ENCODE measurements at regions of chr15 and their contacts with region 1.

Region 1: GRCh38 chr15:63945007-63945788 is 101.1 kb downstream of the DAPK2 start:
- DNase-seq: peak; percentile 85
- H3K4me3 Mint-ChIP-seq: no peak overlapping the region
- H3K27ac Mint-ChIP-seq: no peak overlapping the region
- H3K4me1 Mint-ChIP-seq: peaks cover 3% of the 10 kb centered on the region
- H3K27me3 Mint-ChIP-seq: no peaks in the 10 kb centered on the region

Region 2: GRCh38 chr15:63668601-63669000 is 276.6 kb before region 1 on chr15:
- CTCF ChIA-PET with region 1: no interaction called
- intact Hi-C with region 1: no loop called
- DNase-seq: no peak
- H3K4me3 Mint-ChIP-seq: peak overlapping the region; percentile 57
- H3K27ac Mint-ChIP-seq: peak overlapping the region; percentile 83
- H3K4me1 Mint-ChIP-seq: peaks cover 57% of the 10 kb centered on the region
- H3K27me3 Mint-ChIP-seq: no peaks in the 10 kb centered on the region

Region 3: GRCh38 chr15:63708126-63708772 is 236.9 kb before region 1 on chr15:
- CTCF ChIA-PET with region 1: no interaction called
- intact Hi-C with region 1: no loop called
- DNase-seq: no peak
- H3K4me3 Mint-ChIP-seq: no peak overlapping the region
- H3K27ac Mint-ChIP-seq: peak overlapping the region; percentile 48
- H3K4me1 Mint-ChIP-seq: peaks cover 17% of the 10 kb centered on the region
- H3K27me3 Mint-ChIP-seq: no peaks in the 10 kb centered on the region

Region 4: GRCh38 chr15:63752075-63752684 is 193.0 kb before region 1 on chr15:
- CTCF ChIA-PET with region 1: interaction called, 14 read pairs
- intact Hi-C with region 1: no loop called
- DNase-seq: peak; percentile 60
- H3K4me3 Mint-ChIP-seq: no peak overlapping the region
- H3K27ac Mint-ChIP-seq: no peak overlapping the region
- H3K4me1 Mint-ChIP-seq: no peaks in the 10 kb centered on the region
- H3K27me3 Mint-ChIP-seq: no peaks in the 10 kb centered on the region

Region 5: GRCh38 chr15:63836579-63836978 is 108.6 kb before region 1 on chr15:
- CTCF ChIA-PET with region 1: no interaction called
- intact Hi-C with region 1: no loop called
- DNase-seq: no peak
- H3K4me3 Mint-ChIP-seq: no peak overlapping the region
- H3K27ac Mint-ChIP-seq: no peak overlapping the region
- H3K4me1 Mint-ChIP-seq: peaks cover 24% of the 10 kb centered on the region
- H3K27me3 Mint-ChIP-seq: no peaks in the 10 kb centered on the region

Region 6: GRCh38 chr15:63970621-63971426 is 25.6 kb after region 1 on chr15:
- CTCF ChIA-PET with region 1: interaction called, 14 read pairs
- intact Hi-C with region 1: no loop called
- DNase-seq: peak; percentile 42
- H3K4me3 Mint-ChIP-seq: no peak overlapping the region
- H3K27ac Mint-ChIP-seq: peak overlapping the region; percentile 32
- H3K4me1 Mint-ChIP-seq: peaks cover 22% of the 10 kb centered on the region
- H3K27me3 Mint-ChIP-seq: no peaks in the 10 kb centered on the region

Region 7: GRCh38 chr15:64046347-64047153 is 101.4 kb after region 1 on chr15 and contains the start of gene DAPK2:
- CTCF ChIA-PET with region 1: interaction called, 28 read pairs
- intact Hi-C with region 1: loop called (anchors 2 kb)
- DNase-seq: peak; percentile 56
- H3K4me3 Mint-ChIP-seq: peak within 1 kb of the TSS; percentile 53
- H3K27ac Mint-ChIP-seq: no peak within 1 kb of the TSS
- H3K4me1 Mint-ChIP-seq: peaks cover 4% of the 10 kb centered on the region
- H3K27me3 Mint-ChIP-seq: peaks cover 10% of the 10 kb centered on the region
- total RNA-seq, gene DAPK2: 0.44 TPM in 1 of 2 experiments, not detected in the other

Measured in activated naive CD4-positive, alpha-beta T cell treated with anti-CD3 and anti-CD28 coated beads for 36 hours (primary cell).